ENCODE measurements at regions of chr16 and their contacts with region 1.

Region 1: DNA sequence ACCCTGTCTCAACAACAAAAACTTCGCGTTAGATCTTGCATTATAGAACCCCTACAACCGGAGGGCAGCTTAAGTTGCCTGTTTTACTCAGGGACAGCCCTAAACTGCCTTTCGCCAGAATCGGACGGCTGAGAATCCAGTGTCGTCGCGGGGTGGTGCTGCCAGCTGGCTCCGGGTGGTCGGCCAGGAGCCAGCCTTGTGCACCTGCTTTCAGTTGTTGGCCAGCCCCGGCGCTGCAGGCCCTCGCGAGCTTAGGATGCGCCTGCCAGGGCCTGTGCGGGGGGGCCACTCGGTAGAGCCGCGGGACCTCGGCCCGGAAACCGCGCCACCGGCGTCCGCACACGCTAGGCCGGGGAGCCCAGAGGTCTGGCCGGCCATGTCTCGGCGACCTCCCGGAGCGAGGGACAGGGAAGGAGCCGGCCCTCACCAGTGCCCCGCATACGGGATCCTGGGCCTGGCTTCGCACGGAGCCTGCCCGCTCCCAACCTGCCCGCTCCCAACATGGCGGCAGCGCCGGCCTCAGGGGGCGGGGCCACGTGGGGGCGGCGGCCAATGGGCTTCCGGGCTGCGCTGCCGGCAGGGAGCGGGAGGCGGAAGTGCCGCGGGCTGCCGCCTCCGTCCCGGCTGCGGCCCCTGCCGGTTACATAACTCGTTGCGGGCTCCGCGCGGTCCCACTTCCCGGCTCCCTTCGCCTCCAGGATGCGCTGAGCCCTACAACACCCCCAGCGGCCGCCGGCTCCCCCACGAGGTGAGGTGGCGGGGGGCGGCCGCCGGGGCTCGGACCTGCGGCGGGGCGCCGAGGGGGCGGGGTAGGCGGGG is 14.2 kb downstream of the NAA60 start:
- DNase-seq: peak; percentile 68 to 92
- H3K4me3 ChIP-seq: peak overlapping the region; percentile 84
- H3K27ac ChIP-seq: peak overlapping the region; percentile 67
- H3K4me1 ChIP-seq: peaks cover 20% of the 10 kb centered on the region
- H3K27me3 ChIP-seq: no peaks in the 10 kb centered on the region
- CTCF ChIP-seq: no peak; the same call in 1 of the 2 replicates

Region 2: DNA sequence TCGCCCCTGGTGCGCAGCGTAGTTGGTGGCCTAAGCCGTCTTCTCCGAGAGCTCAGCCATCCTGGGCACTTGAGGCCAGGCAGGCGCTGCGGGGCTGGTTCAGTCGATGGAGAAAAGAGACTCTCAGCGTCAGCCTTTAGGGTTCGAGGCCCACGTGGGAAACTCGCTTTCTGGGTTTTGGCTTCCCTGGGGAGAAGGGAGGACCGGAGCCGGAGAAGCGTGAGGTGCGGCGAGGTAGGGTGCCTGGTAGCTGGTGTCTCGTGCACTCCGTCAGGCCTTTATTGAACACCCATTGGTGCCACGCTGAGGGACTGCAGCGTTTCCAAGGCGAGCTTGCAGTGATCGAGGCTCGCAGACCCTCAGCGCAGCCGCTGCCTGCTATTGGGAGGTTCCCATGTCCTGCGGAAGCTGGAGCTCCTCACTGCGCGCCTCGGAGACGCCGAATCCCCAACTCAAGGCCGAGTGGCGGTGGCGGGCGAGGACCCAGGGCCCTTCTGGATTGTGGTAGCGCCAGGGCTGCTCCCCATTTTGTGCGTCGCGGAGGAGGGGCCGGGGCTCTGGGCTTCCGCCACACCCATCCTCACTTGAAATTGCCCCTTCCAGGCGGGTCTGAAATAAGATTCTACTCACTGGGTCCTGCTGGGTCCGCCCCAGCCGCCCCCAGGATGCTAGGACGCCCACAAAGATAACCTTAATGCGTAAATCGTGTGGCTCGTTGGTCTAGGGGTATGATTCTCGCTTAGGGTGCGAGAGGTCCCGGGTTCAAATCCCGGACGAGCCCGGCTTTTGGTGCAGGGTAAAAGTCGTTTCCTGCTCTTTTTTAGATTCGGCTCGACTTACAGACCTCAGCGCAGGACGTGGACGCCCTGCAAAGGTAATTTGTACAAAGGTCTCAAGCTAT is 268.5 kb before region 1 on chr16:
- CTCF ChIA-PET with region 1: no interaction called
- POLR2A ChIA-PET with region 1: no interaction called
- intact Hi-C with region 1: loop called (anchors 5 kb)
- DNase-seq: peak; percentile 59 to 60
- H3K4me3 ChIP-seq: peak overlapping the region; percentile 94
- H3K27ac ChIP-seq: 0 out of 2 replicates have a peak overlapping the region, but pooled peaks have one; percentile 33
- H3K4me1 ChIP-seq: 0 out of 2 replicates have a peak, but pooled peaks cover 5% of the 10 kb centered on the region
- H3K27me3 ChIP-seq: no peaks in the 10 kb centered on the region
- CTCF ChIP-seq: no peak

Region 3: DNA sequence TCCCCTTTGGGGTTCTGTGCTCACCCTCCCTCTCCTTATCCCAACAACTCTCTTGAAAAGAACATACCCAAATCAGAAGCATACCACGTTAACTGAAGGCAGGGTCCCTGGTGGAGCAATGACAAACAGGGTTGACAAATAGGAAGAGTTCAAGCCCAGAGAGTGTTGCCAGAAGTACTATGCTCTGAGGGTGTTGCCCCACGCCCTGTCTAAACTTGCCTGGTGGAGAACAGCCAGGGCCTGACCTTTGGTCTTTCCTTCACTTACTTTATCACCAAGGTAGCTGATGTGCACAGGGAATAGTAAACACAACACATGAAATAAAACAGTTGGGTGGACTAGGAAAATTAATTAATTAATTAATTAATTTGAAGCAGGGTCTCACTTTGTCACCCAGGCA is 129.0 kb before region 1 on chr16:
- CTCF ChIA-PET with region 1: no interaction called
- POLR2A ChIA-PET with region 1: no interaction called
- intact Hi-C with region 1: no loop called
- DNase-seq: no peak
- H3K4me3 ChIP-seq: no peak overlapping the region
- H3K27ac ChIP-seq: no peak overlapping the region
- H3K4me1 ChIP-seq: no peaks in the 10 kb centered on the region
- H3K27me3 ChIP-seq: peaks cover 17% of the 10 kb centered on the region; the same call in 1 of the 2 replicates
- CTCF ChIP-seq: no peak

Region 4: GRCh38 chr16:3348547-3349167 is 109.0 kb before region 1 on chr16:
- CTCF ChIA-PET with region 1: no interaction called
- POLR2A ChIA-PET with region 1: no interaction called
- intact Hi-C with region 1: no loop called
- DNase-seq: no peak
- H3K4me3 ChIP-seq: no peak overlapping the region
- H3K27ac ChIP-seq: no peak overlapping the region
- H3K4me1 ChIP-seq: no peaks in the 10 kb centered on the region
- H3K27me3 ChIP-seq: peaks cover 64% of the 10 kb centered on the region
- CTCF ChIP-seq: no peak

Region 5: DNA sequence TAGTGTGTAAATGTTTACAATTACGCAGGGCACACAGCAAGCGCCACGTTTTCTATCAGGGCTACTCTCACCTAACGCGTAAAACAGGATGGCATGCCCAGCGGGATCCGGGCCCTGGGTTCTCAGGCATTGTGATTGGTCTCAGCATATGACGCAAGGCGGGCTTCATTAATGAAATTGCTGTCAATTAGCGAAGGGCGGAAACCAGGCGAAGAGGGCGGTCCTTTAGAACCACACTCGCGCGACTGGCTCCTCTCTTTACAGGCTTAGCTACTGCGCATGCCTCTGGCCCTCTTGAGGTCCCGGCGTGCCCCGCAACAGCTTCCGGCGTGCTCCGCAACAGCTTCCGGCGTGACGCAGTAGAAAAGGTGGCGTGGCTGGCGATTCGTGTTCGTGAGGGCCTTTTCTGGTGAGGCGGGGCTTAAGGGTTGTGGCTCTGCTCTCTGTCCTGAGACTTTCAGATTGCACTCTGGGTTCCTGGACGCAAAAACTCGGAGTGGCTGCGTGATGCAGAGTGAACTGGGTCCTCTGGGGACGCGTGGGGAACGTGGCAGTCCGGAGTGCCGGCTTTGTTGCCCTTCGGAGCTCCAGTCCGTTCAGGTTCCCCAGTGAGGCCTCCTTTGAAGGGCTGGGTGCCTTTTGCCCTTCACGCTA is 92.7 kb before region 1 on chr16:
- CTCF ChIA-PET with region 1: no interaction called
- POLR2A ChIA-PET with region 1: no interaction called
- intact Hi-C with region 1: loop called (anchors 10 kb)
- DNase-seq: peak in 1 of 2 experiments; percentile 73
- H3K4me3 ChIP-seq: no peak overlapping the region
- H3K27ac ChIP-seq: no peak overlapping the region
- H3K4me1 ChIP-seq: no peaks in the 10 kb centered on the region
- H3K27me3 ChIP-seq: peaks cover 42% of the 10 kb centered on the region
- CTCF ChIP-seq: no peak

Region 6: GRCh38 chr16:3400779-3401688 is 56.6 kb before region 1 on chr16 and contains the starts of genes ZNF174 and ZSCAN32:
- CTCF ChIA-PET with region 1: no interaction called
- POLR2A ChIA-PET with region 1: interaction called, 3 read pairs
- intact Hi-C with region 1: loop called (anchors 2 kb)
- DNase-seq: peak; percentile 98 to 100
- H3K4me3 ChIP-seq: peak within 1 kb of the TSS; percentile 74
- H3K27ac ChIP-seq: peak within 1 kb of the TSS; percentile 40; the same call in 1 of the 2 replicates
- H3K4me1 ChIP-seq: peaks cover 12% of the 10 kb centered on the region; the same call in 1 of the 2 replicates
- H3K27me3 ChIP-seq: no peaks in the 10 kb centered on the region
- CTCF ChIP-seq: no peak
- total RNA-seq, gene ZNF174: 12.1 and 13.2 TPM in 2 replicates
- total RNA-seq, gene ZSCAN32: 15.5 and 16.4 TPM in 2 replicates

Region 7: DNA sequence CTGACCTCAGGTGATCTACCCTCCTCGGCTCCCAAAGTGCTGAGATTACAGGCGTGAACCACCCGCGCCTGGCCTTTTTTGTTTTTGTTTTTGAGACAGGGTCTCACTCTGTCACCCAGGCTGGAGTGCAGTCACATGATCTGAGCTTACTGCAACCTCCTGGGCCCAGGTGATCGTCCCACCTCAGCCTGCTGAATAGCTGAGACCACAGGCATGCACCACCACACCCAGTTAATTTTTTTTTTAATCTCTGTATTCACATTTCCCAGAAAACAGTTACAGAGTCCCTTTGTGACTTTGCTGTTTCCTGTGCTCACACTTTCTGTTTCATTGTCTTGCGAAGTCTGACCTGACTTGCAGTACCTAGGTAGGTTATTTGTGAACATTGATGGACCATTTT is 45.9 kb after region 1 on chr16:
- CTCF ChIA-PET with region 1: no interaction called
- POLR2A ChIA-PET with region 1: no interaction called
- intact Hi-C with region 1: loop called (anchors 1 kb)
- DNase-seq: peak; percentile 54 to 82
- H3K4me3 ChIP-seq: no peak overlapping the region
- H3K27ac ChIP-seq: peak overlapping the region; percentile 22; the same call in 1 of the 2 replicates
- H3K4me1 ChIP-seq: peaks cover 20% of the 10 kb centered on the region
- H3K27me3 ChIP-seq: no peaks in the 10 kb centered on the region
- CTCF ChIP-seq: no peak

Region 8: GRCh38 chr16:3509470-3509928 is 51.9 kb after region 1 on chr16:
- CTCF ChIA-PET with region 1: no interaction called
- POLR2A ChIA-PET with region 1: no interaction called
- intact Hi-C with region 1: loop called (anchors 2 kb)
- DNase-seq: peak; percentile 89 to 96
- H3K4me3 ChIP-seq: no peak overlapping the region
- H3K27ac ChIP-seq: 0 out of 2 replicates have a peak overlapping the region, but pooled peaks have one; percentile 3
- H3K4me1 ChIP-seq: peaks cover 23% of the 10 kb centered on the region
- H3K27me3 ChIP-seq: no peaks in the 10 kb centered on the region
- CTCF ChIP-seq: no peak

Measured in PC-9 (cell line).